Mammary epithelial cell (primary cell): ENCODE measurements at regions of chr11 and their contacts with region 1.

Region 1: GRCh38 chr11:111472228-111472627 is 40.0 kb downstream of the BTG4 start:
- DNase-seq: peak; percentile 53
- H3K4me3 ChIP-seq: no peak overlapping the region
- H3K27ac ChIP-seq: no peak overlapping the region
- H3K4me1 ChIP-seq: no peaks in the 10 kb centered on the region
- H3K27me3 ChIP-seq: no peaks in the 10 kb centered on the region
- CTCF ChIP-seq: no peak

Region 2: DNA sequence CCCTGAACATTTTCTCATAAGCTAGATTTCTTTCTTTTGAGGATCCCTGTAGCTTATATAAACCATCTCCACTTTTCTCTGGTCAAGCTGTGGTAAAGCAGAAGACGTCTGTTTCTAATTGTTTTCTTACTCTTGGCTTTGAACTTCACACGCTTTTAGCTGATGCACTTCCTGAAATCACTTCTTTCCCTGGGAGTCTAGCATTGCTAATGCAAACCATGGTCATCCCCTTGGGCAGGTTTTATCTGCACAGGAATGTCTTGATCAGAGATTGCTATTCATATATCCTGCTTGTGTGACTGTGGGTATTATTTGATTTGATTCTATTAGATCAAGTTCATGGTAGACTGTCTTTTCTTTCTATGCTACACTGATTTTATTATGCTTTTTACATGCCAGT is 425.9 kb before region 1 on chr11:
- CTCF ChIA-PET with region 1: no interaction called
- dilution Hi-C with region 1: no loop called
- in situ Hi-C with region 1: no loop called
- intact Hi-C with region 1: no loop called
- DNase-seq: no peak
- H3K4me3 ChIP-seq: no peak overlapping the region
- H3K27ac ChIP-seq: no peak overlapping the region
- H3K4me1 ChIP-seq: no peaks in the 10 kb centered on the region
- H3K27me3 ChIP-seq: peaks cover 2% of the 10 kb centered on the region
- CTCF ChIP-seq: no peak

Region 3: DNA sequence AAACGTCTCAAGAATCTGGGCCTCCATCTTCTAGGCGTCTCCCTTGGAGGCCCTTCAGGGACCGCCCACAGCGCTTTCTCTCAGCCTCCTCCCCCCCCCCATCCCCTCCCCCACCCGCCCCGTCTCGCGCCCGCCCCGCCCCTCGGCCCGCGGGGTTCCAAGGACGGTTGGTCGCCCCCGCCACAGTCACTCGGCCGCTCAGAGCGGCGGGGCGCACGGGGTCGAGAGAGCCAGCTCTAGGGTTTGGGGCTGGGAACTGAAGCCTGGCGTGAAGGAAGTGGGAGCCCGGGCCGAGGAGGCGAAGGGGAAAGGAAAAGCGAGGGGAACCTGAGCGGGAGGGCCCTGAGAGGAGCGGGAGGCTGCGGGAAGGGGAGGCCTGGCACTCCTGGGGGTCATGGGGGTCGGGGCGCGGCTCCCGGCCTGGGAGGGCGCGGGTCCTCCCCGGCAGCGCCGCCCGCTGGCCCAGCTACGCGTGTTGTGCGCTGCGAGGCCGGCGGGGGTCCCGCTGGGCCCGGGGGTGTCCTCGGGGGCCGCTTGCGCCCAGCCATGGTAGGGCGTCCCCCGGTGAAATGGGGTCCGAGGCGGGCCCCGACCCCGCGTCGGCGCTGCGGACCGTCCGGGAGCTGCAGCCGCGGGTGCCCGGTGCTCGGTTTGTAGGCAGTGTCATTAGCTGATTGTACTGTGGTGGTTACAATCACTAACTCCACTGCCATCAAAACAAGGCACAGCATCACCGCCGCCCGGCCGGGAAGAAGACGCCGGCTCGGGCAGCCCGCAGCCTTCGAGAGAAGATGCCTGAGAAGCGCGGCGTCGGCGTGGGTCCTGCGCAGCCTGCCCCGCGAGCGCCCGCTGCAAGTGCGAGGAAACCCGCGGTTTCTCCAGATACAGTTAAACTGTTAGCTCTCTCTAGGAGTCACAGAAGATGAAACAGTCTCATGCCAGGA is 40.3 kb after region 1 on chr11 and contains the start of gene BTG4:
- CTCF ChIA-PET with region 1: no interaction called
- dilution Hi-C with region 1: no loop called
- in situ Hi-C with region 1: no loop called
- intact Hi-C with region 1: loop called (anchors 5 kb)
- DNase-seq: no peak
- H3K4me3 ChIP-seq: peak within 1 kb of the TSS; percentile 43 to 52 (median 43)
- H3K27ac ChIP-seq: peak within 1 kb of the TSS; percentile 99
- H3K4me1 ChIP-seq: peaks cover 36% of the 10 kb centered on the region
- H3K27me3 ChIP-seq: no peaks in the 10 kb centered on the region
- CTCF ChIP-seq: no peak
- total RNA-seq, gene BTG4: not detected